ENCODE measurements at regions of chr5 and their contacts with region 1.

Region 1: DNA sequence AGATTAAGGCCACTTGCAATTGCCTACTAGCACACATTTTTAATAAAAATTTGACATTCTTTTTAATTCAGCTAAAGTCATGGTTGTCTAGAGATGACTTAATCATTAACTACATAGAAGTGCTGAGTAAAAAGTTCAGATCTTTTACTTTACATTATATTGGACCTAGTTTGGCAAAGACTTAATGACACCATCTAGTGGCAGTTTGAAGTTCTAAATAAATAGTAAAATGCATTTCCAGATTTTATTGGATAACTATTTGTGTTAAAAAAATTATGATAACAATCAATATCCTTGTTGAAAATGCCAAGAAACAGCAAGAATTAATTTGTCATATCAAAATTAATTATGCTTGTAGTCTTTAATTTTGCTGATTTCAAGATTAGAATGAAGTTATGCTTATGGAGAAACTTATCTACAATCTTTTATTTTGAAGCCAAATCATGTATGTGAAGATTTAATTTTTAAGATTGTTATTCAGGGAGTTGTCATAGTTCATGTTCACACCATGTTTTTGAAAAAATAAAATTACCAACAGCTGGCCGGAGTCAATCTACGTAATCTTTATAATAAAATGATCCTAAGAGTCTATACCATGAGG is 69.6 kb upstream of the PJA2 start:
- DNase-seq: peak; percentile 60
- H3K4me3 ChIP-seq: no peak overlapping the region
- H3K27ac ChIP-seq: no peak overlapping the region
- H3K4me1 ChIP-seq: peaks cover 23% of the 10 kb centered on the region
- H3K27me3 ChIP-seq: no peaks in the 10 kb centered on the region
- CTCF ChIP-seq: peak; percentile 68

Region 2: GRCh38 chr5:108642167-108642906 is 837.0 kb before region 1 on chr5:
- CTCF ChIA-PET with region 1: no interaction called
- POLR2A ChIA-PET with region 1: no interaction called
- intact Hi-C with region 1: loop called (anchors 2 kb)
- DNase-seq: peak; percentile 92
- H3K4me3 ChIP-seq: no peak overlapping the region
- H3K27ac ChIP-seq: peak overlapping the region; percentile 43
- H3K4me1 ChIP-seq: peaks cover 26% of the 10 kb centered on the region
- H3K27me3 ChIP-seq: no peaks in the 10 kb centered on the region
- CTCF ChIP-seq: peak; percentile 92

Region 3: GRCh38 chr5:108681079-108681921 is 798.1 kb before region 1 on chr5:
- CTCF ChIA-PET with region 1: no interaction called
- POLR2A ChIA-PET with region 1: no interaction called
- intact Hi-C with region 1: loop called (anchors 5 kb)
- DNase-seq: peak; percentile 81
- H3K4me3 ChIP-seq: no peak overlapping the region
- H3K27ac ChIP-seq: no peak overlapping the region
- H3K4me1 ChIP-seq: no peaks in the 10 kb centered on the region
- H3K27me3 ChIP-seq: no peaks in the 10 kb centered on the region
- CTCF ChIP-seq: peak; percentile 84

Region 4: GRCh38 chr5:108919591-108920326 is 559.6 kb before region 1 on chr5:
- CTCF ChIA-PET with region 1: no interaction called
- POLR2A ChIA-PET with region 1: no interaction called
- intact Hi-C with region 1: loop called (anchors 10 kb)
- DNase-seq: peak; percentile 20
- H3K4me3 ChIP-seq: no peak overlapping the region
- H3K27ac ChIP-seq: no peak overlapping the region
- H3K4me1 ChIP-seq: peaks cover 9% of the 10 kb centered on the region
- H3K27me3 ChIP-seq: no peaks in the 10 kb centered on the region
- CTCF ChIP-seq: peak; percentile 57